Right cardiac atrium (tissue), 5 donors: ENCODE measurements at regions of chr5 and their contacts with region 1.

Region 1: GRCh38 chr5:87151547-87151946 is 116.1 kb upstream of the RASA1 start:
- DNase-seq: no peak
- ATAC-seq: no peak
- H3K4me3 ChIP-seq: no peak overlapping the region
- H3K27ac ChIP-seq: no peak overlapping the region
- H3K4me1 ChIP-seq: no peaks in the 10 kb centered on the region
- H3K27me3 ChIP-seq: no peaks in the 10 kb centered on the region

Region 2: GRCh38 chr5:86841000-86841644 is 310.4 kb before region 1 on chr5:
- intact Hi-C with region 1: no loop called
- DNase-seq: no peak
- ATAC-seq: no peak
- H3K4me3 ChIP-seq: no peak overlapping the region
- H3K27ac ChIP-seq: no peak overlapping the region
- H3K4me1 ChIP-seq: no peaks in the 10 kb centered on the region
- H3K27me3 ChIP-seq: no peaks in the 10 kb centered on the region

Region 3: GRCh38 chr5:87109746-87110145 is 41.8 kb before region 1 on chr5:
- intact Hi-C with region 1: loop called in 1 of 4 experiments (anchors 5 kb)
- DNase-seq: peak in 1 of 3 donors; percentile 54
- ATAC-seq: no peak
- H3K4me3 ChIP-seq: no peak overlapping the region
- H3K27ac ChIP-seq: no peak overlapping the region
- H3K4me1 ChIP-seq: no peaks in the 10 kb centered on the region
- H3K27me3 ChIP-seq: no peaks in the 10 kb centered on the region